Activated naive CD4-positive, alpha-beta T cell treated with anti-CD3 and anti-CD28 coated beads, Interleukin-2, amount 10 ng/mL, durations not matched to agents 7 days and 5 days (primary cell): ENCODE measurements at regions of chr10 and their contacts with region 1.

Region 1: GRCh38 chr10:6667679-6668270 is 87.7 kb upstream of the PRKCQ start:
- DNase-seq: peak; percentile 71
- H3K4me3 Mint-ChIP-seq: no peak overlapping the region
- H3K27ac Mint-ChIP-seq: no peak overlapping the region
- H3K4me1 Mint-ChIP-seq: peaks cover 30% of the 10 kb centered on the region
- H3K27me3 Mint-ChIP-seq: peaks cover 17% of the 10 kb centered on the region

Region 2: DNA sequence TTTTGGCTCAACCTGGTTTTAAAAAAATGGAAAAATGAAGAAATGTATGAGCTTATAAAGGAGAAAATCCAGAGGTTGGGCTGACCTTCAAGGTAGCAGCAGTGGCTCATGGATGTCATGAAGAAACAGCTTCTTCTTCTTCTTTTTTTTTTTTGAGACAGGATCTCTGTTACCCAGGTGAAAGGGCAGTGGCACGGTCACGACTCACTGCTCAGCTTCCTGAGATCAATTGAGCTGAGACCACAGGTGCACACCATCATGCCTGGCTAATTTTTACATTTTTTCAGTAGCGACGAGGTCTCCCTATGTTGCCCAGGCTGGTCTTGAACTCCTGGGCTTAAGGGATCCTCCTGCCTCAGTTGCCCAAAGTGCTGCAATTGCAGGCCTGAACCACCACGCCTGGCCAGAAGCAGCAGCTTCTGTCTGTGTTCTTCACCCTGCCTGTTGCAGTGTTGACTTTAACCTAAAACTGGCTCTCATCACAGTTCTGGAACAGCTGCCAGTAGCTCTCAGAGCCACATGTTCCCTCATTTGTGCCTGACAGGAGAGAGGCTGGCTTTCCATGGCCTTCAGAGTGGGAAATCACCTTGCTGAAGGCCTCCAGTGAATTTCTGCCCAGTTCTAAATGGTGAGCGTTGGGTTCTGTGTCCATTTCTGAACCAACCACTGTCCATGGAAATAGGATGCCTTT is 347.3 kb before region 1 on chr10:
- CTCF ChIA-PET with region 1: no interaction called
- DNase-seq: no peak
- H3K4me3 Mint-ChIP-seq: no peak overlapping the region
- H3K27ac Mint-ChIP-seq: no peak overlapping the region
- H3K4me1 Mint-ChIP-seq: peaks cover 5% of the 10 kb centered on the region
- H3K27me3 Mint-ChIP-seq: no peaks in the 10 kb centered on the region

Region 3: DNA sequence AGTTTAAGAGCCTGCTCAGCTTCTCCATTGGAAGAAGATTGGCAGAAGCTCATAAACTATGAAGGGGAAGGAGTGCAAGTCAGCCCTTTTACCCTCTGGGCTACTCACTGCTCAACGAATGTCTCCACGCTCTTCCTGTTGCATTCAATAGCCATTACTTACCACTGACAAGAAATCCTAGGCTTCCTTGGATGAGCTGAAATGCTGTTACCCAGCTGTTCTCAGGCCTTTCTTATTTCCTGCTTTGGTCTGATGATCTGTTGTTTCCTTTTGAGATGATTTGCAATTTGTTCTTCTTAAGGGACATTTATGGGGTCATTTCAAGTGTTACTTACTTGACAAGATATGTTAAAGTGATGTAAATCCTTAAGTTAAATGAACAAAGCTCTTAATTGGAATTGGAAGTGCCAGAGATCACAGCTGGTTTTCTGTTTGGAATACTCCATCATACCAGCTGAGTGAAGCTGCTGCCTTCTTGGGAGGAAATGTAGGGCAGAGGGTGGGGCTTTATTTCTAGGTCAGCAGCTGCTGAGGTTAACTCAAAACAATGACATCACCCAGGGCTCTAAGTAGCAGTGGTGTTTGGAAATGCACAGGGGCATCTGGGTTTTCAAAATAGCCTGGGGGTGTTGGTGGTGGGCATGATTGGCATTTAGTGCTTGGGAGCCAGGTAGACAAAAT is 257.7 kb before region 1 on chr10:
- CTCF ChIA-PET with region 1: interaction called, 48 read pairs
- DNase-seq: peak; percentile 64
- H3K4me3 Mint-ChIP-seq: peak overlapping the region; percentile 16
- H3K27ac Mint-ChIP-seq: peak overlapping the region; percentile 86
- H3K4me1 Mint-ChIP-seq: peaks cover 51% of the 10 kb centered on the region
- H3K27me3 Mint-ChIP-seq: peaks cover 3% of the 10 kb centered on the region

Region 4: GRCh38 chr10:6445501-6446316 is 222.1 kb before region 1 on chr10:
- CTCF ChIA-PET with region 1: interaction called, 32 read pairs
- DNase-seq: peak; percentile 81
- H3K4me3 Mint-ChIP-seq: no peak overlapping the region
- H3K27ac Mint-ChIP-seq: peak overlapping the region; percentile 34
- H3K4me1 Mint-ChIP-seq: peaks cover 42% of the 10 kb centered on the region
- H3K27me3 Mint-ChIP-seq: no peaks in the 10 kb centered on the region

Region 5: GRCh38 chr10:6580279-6581029 is 87.3 kb before region 1 on chr10:
- CTCF ChIA-PET with region 1: interaction called, 45 read pairs
- DNase-seq: peak; percentile 88
- H3K4me3 Mint-ChIP-seq: peak overlapping the region; percentile 94
- H3K27ac Mint-ChIP-seq: peak overlapping the region; percentile 98
- H3K4me1 Mint-ChIP-seq: peaks cover 42% of the 10 kb centered on the region
- H3K27me3 Mint-ChIP-seq: no peaks in the 10 kb centered on the region

Region 6: DNA sequence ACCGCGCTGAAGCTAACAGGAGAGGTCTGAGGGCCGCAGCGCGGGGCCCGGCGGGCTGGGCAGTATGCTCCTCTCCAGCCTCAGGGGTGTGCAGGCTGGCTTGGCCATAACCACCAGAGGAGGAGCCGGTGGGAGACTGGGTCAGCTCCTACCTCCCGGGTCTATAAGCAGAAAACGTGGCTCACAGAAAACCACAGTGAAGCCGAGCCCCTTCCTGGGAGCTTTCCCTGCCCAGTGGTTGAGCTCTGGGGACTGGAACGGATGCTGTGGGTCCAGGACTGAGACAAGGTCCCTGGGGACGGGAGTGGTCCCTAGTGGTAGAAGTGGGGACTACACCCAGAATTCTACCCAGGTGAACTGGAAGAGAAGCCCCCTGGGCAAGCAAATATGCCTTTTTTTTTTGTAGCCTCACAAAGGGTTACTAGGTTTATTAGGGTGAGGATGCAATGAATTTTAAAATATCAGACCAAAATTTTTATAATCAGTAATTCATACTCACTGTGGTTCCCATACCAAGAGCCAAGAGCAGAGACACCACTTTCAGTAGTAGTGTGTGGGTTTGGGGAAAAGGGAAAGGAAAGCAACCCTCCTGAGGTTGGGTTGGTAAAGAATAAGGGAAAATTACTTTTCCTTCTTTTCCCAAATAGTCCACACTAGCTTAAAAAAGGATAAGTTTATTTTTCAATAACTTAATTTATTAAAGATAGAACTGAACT is 19.8 kb before region 1 on chr10:
- CTCF ChIA-PET with region 1: interaction called, 10 read pairs
- DNase-seq: peak; percentile 81
- H3K4me3 Mint-ChIP-seq: no peak overlapping the region
- H3K27ac Mint-ChIP-seq: no peak overlapping the region
- H3K4me1 Mint-ChIP-seq: peaks cover 45% of the 10 kb centered on the region
- H3K27me3 Mint-ChIP-seq: peaks cover 6% of the 10 kb centered on the region